ENCODE measurements at regions of chr9 and their contacts with region 1.

Region 1: GRCh38 chr9:137034863-137035761 is 3.2 kb upstream of the FUT7 start:
- DNase-seq: peak; percentile 95
- ATAC-seq: peak; percentile 89
- H3K4me3 Mint-ChIP-seq: peak overlapping the region; percentile 62
- H3K27ac Mint-ChIP-seq: peak overlapping the region; percentile 93
- H3K4me1 Mint-ChIP-seq: peaks cover 38% of the 10 kb centered on the region
- H3K27me3 Mint-ChIP-seq: no peaks in the 10 kb centered on the region

Region 2: DNA sequence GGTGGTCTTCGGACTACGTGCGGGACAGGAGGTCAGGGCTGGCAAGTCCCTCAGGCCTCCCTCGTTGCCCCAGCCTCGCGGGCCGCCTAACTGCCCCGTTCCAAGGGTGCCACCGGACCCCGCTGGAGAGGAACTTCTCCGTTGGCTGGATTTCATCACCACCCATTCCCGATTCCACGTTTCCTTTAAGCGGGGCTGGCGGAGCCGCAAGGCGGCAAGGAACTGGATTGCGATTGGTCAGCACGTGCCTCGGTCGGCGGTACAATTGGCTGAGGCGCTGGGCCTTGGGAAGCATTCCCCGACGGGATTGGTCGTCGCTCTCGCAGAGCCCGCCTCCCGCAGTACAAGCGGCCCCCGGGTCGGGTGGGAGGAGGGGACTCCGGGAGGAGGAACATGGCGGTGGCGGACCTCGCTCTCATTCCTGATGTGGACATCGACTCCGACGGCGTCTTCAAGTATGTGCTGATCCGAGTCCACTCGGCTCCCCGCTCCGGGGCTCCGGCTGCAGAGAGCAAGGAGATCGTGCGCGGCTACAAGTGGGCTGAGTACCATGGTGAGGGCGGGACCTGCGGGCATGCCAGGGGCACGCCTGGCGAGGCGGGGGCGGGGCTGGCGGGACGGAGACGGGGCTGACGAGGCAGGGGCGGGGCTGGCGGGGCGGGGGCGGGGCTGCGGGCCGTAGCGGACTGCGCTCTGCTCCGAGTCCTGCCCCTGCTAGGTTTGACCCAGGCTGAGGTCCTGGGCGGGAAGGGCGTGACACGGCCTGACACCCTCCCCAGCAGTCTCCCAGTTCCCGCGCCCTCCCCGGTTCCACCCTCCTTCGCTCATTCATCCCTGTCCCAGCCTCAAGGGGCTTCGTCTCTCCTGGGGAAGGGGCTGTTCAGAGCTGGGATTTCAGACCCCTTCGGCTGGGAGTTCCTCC is 185.8 kb before region 1 on chr9 and contains the start of gene PHPT1:
- CTCF ChIA-PET with region 1: interaction called, 38 read pairs
- DNase-seq: peak; percentile 98
- ATAC-seq: peak; percentile 93
- H3K4me3 Mint-ChIP-seq: peak within 1 kb of the TSS; percentile 88
- H3K27ac Mint-ChIP-seq: peak within 1 kb of the TSS; percentile 92
- H3K4me1 Mint-ChIP-seq: peaks cover 16% of the 10 kb centered on the region
- H3K27me3 Mint-ChIP-seq: peaks cover 20% of the 10 kb centered on the region
- total RNA-seq, gene PHPT1: 96.8 to 116 TPM

Region 3: GRCh38 chr9:136944519-136945279 is 90.4 kb before region 1 on chr9 and contains the starts of genes C8G and FBXW5:
- CTCF ChIA-PET with region 1: interaction called, 183 read pairs
- DNase-seq: peak; percentile 96
- ATAC-seq: peak; percentile 81
- H3K4me3 Mint-ChIP-seq: peak within 1 kb of the TSS; percentile 79
- H3K27ac Mint-ChIP-seq: peak within 1 kb of the TSS; percentile 81
- H3K4me1 Mint-ChIP-seq: peaks cover 18% of the 10 kb centered on the region
- H3K27me3 Mint-ChIP-seq: no peaks in the 10 kb centered on the region
- total RNA-seq, gene C8G: 1.7 TPM in 1 of 2 experiments, not detected in the other
- total RNA-seq, gene FBXW5: 106 to 107 TPM

Region 4: GRCh38 chr9:136991993-136992818 is 42.9 kb before region 1 on chr9 and contains the start of gene PAXX:
- CTCF ChIA-PET with region 1: interaction called, 234 read pairs
- DNase-seq: peak; percentile 96
- ATAC-seq: peak; percentile 88
- H3K4me3 Mint-ChIP-seq: peak within 1 kb of the TSS; percentile 84
- H3K27ac Mint-ChIP-seq: peak within 1 kb of the TSS; percentile 82
- H3K4me1 Mint-ChIP-seq: peaks cover 32% of the 10 kb centered on the region
- H3K27me3 Mint-ChIP-seq: peaks cover 9% of the 10 kb centered on the region
- total RNA-seq, gene PAXX: 68.6 to 94.8 TPM

Region 5: DNA sequence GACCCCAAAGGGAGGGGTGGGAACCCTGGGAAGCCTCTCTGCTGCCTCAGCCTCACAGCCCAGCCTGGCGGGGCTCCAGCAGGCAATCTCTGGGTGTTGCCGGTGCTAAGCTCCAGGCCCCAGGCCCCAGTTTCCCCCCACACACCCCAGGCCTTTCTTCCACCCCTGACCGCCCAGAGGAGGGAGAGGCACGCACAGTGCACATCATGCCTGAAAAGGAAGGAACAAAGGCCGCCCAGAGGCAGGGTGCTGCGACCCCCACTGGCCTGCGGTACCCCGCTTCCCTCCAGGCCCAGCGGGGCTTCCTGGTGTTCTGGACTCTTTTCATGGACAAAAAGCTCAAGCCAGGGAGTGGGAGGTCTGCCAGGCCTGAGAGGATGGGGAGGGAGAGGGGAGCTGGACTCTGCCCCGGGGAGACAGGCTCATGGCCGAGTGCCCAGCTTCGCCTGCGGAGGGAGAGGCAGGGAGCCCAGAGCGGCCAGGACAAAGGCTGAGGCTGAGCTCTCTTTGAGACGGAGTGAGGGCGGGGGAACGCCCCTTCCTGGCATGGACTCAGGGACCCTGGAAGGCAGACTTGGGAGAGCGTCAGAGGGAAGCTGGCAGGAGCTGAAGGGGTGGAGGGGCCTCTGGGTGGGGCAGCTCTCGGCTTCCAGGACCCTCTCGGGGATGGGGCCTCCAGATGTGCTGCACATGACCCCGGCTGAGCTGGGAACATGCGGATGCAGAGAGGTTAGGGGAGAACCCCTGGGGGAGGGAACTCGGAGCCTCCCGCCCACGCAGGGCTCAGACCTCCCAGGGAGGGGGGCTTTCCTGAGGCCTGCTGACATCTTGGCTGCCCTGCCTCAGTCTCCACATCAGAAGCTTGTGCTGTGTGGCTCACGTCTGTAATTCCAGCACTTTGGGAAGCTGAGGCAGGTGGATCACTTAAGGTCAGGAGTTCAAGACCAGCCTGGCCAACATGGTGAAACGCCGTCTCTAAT is 20.6 kb after region 1 on chr9:
- CTCF ChIA-PET with region 1: interaction called, 10 read pairs
- DNase-seq: no peak
- ATAC-seq: no peak
- H3K4me3 Mint-ChIP-seq: no peak overlapping the region
- H3K27ac Mint-ChIP-seq: no peak overlapping the region
- H3K4me1 Mint-ChIP-seq: peaks cover 2% of the 10 kb centered on the region
- H3K27me3 Mint-ChIP-seq: peaks cover 23% of the 10 kb centered on the region

Region 6: DNA sequence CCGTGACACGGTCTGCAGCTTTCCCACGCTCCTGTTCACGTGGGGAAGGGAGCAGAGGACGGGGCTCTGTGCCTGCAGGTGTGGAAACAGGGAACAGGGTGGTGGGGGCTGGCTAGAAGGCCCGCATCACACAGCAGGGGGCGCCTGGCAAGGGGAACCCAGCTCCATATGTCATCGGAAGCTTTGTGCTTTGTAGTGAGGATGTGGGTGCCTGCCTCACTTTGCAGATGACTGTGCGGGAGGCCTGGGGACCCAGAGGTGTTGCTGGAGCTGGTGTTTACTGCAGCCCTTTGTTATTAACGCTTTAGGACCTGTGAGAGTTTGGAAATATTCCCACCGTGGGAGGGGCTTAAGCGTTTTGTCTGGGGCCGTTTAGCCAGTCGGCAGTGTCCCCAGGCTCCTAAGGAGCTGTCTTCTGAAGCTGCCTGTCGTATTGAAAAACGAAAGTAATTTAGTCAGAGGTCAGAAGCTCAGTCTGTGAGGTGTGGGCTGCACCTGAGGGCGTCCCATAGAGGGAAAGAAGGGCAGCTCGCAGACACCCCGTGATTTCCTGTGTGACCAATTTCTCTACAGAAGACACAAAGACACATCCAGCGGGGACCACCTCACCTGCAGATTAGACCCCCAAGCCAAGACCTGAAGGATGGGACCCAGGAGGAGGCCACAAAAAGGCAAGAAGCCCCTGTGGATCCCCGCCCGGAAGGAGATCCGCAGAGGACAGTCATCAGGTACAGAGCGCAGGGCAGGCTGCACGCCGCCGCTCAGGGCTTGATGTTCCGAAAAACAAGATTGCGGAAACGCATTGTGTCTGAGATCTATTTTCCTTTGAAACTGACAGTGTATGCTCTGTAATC is 60.8 kb after region 1 on chr9:
- CTCF ChIA-PET with region 1: interaction called, 13 read pairs
- DNase-seq: peak; percentile 95
- ATAC-seq: peak; percentile 98
- H3K4me3 Mint-ChIP-seq: peak overlapping the region; percentile 85
- H3K27ac Mint-ChIP-seq: peak overlapping the region; percentile 97
- H3K4me1 Mint-ChIP-seq: peaks cover 30% of the 10 kb centered on the region
- H3K27me3 Mint-ChIP-seq: no peaks in the 10 kb centered on the region